Left colon (tissue), 2 donors: ENCODE measurements at regions of chr14 and their contacts with region 1.

Region 1: GRCh38 chr14:34966413-34966812 is 16.4 kb upstream of the SRP54 start:
- DNase-seq: no peak
- ATAC-seq: no peak

Region 2: GRCh38 chr14:34781242-34781641 is 185.2 kb before region 1 on chr14:
- intact Hi-C with region 1: no loop called
- DNase-seq: no peak
- ATAC-seq: no peak

Region 3: DNA sequence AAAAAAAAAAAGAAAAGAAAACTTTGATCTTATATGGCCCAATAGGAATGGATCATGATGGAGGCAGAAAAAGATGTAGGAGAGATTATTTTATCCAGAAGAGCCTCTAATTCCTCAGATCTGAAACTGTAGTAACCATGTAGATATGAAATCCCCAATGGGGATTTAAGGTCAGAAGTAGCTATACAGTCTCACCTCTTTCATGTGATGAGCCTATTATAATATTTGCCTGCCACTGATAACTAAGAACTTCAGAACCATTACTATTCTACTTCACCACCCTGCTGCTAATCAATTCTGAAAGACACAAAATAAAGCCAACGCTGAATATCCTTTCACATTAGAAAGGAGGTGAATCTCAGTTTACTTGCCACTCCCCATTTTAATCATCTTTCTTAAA is 120.5 kb before region 1 on chr14:
- intact Hi-C with region 1: loop called in 1 of 2 experiments (anchors 5 kb)
- DNase-seq: no peak
- ATAC-seq: no peak